Panc1 (cell line): ENCODE measurements at regions of chr9 and their contacts with region 1.

Region 1: DNA sequence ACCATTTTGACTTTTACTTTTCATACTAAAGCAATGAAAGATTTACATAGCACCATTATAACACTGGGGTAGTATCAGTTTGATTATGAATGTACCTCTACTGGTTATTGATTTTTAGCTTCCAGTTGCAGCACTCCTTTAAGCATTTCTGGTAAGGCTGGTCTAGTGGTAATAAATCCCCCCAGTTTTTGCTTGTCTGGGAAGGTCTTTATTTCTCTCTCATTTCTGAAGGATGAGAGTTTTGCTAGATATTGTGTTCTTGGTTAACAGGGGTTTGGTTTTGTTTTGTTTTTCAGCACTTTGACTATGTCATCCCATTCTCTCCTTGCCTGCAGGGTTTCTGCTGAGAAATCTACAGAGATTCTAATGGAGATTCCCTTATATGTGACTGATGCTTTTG is 26.9 kb upstream of the IGFBPL1 start:
- DNase-seq: no peak
- ATAC-seq: no peak
- H3K4me3 ChIP-seq: no peak overlapping the region
- H3K27ac ChIP-seq: no peak overlapping the region
- H3K4me1 ChIP-seq: no peaks in the 10 kb centered on the region
- H3K27me3 ChIP-seq: no peaks in the 10 kb centered on the region; the same call in 1 of the 2 replicates
- CTCF ChIP-seq: no peak

Region 2: DNA sequence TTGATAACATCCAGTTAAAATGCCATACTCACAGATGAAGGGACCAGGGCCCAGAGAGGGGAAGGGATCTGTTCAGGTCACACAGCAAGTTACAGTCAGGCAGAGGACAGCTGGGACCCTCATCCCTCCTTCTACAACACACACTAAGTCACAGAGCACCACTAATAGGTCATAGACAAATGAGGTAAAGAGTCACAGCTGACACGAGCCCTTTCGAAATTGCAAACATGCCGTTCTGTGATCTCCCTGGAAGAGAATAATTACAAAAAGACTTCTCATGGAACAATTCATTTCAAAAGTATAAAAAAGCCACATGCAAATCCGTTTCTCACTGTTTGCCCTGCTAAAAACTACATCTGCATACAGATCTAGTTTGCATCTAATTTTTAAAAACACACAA is 42.4 kb before region 1 on chr9:
- CTCF ChIA-PET with region 1: no interaction called
- POLR2A ChIA-PET with region 1: interaction called, 19 read pairs
- in situ Hi-C with region 1: no loop called
- intact Hi-C with region 1: no loop called
- DNase-seq: no peak
- ATAC-seq: no peak
- H3K4me3 ChIP-seq: no peak overlapping the region
- H3K27ac ChIP-seq: no peak overlapping the region
- H3K4me1 ChIP-seq: no peaks in the 10 kb centered on the region
- H3K27me3 ChIP-seq: no peaks in the 10 kb centered on the region
- CTCF ChIP-seq: no peak